Endothelial cell of umbilical vein (primary cell): ENCODE measurements at regions of chr2 and their contacts with region 1.

Region 1: GRCh38 chr2:15630121-15630977 is 38.7 kb downstream of the DDX1 start:
- DNase-seq: no peak
- H3K4me3 ChIP-seq: no peak overlapping the region
- H3K27ac ChIP-seq: no peak overlapping the region
- H3K4me1 ChIP-seq: peaks cover 13% of the 10 kb centered on the region
- H3K27me3 ChIP-seq: no peaks in the 10 kb centered on the region
- CTCF ChIP-seq: no peak
- POLR2A ChIP-seq: no peak

Region 2: DNA sequence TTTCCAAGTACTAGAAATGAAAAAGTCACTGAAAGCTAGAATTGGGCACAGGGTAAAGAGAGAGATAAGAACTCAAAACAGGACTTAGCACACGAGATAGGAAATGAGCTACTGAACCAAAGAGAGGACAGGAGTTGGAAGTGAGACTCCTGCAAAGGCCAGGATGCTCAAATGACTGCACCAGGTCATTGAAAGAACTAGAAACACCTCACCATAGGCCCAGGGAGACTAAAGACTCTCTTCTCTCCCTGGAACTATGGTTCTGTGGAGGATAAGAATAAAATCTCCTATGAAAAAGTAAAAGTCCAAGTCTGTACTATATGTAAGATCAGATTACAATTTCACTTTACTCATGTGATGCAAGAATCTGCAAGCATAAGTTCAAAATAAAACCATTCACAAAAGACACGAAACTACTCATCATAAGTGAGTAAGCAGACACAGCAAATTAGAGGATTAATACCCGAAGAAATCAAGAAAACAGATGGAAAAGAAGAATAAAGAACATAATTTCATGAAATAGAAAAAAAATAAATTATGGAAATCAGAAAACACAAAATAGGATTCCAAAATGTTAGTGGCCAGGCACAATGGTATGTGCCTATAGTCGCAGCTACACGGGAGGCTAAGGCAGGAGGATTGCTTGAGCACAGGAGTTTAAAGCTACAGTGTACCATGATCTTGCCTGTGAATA is 75.7 kb before region 1 on chr2:
- CTCF ChIA-PET with region 1: no interaction called
- POLR2A ChIA-PET with region 1: no interaction called
- dilution Hi-C with region 1: no loop called
- intact Hi-C with region 1: loop called (anchors 2 kb)
- DNase-seq: no peak
- H3K4me3 ChIP-seq: no peak overlapping the region
- H3K27ac ChIP-seq: no peak overlapping the region
- H3K4me1 ChIP-seq: peaks cover 4% of the 10 kb centered on the region
- H3K27me3 ChIP-seq: no peaks in the 10 kb centered on the region
- CTCF ChIP-seq: no peak
- POLR2A ChIP-seq: no peak